Naive thymus-derived CD4-positive, alpha-beta T cell (primary cell): ENCODE measurements at regions of chr17 and their contacts with region 1.

Region 1: DNA sequence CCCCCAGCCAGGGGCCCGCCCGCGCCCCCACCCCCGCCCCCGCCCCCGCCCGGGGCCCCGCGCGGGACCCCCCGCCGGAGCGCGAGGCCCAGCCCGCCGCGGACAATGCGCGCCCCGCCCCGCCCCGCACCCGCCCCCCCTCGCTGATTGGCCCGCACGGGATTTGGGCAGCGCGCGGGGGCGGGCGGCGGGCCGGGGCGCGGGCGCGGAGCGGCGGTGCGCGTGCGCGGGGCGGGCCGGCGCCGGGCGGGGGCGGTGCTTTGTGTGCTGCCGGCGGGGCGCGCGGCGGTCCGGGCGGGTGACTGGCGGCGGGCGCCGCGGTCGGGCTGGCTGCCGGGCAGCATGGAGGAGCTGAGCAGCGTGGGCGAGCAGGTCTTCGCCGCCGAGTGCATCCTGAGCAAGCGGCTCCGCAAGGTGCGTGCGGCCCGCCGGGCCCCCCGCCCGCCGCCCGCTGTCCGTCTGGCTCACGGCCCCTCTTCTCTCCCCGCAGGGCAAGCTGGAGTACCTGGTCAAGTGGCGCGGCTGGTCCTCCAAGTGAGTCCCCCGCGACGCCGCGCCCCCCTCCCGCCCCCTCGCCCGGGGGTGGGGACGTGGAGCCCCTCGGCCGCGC is at the start of gene CBX2:
- DNase-seq: peak; percentile 58 to 92 (median 77)
- ATAC-seq: peak; percentile 95
- H3K4me3 ChIP-seq: peak within 1 kb of the TSS; percentile 28
- H3K4me3 Mint-ChIP-seq: peak within 1 kb of the TSS; percentile 80 to 92 (median 86)
- H3K27ac ChIP-seq: no peak within 1 kb of the TSS
- H3K27ac Mint-ChIP-seq: peak within 1 kb of the TSS in 8 of 9 donors; percentile 32 to 89 (median 72)
- H3K4me1 ChIP-seq: peaks cover 7 to 10% of the 10 kb centered on the region in 2 donors
- H3K4me1 Mint-ChIP-seq: peaks cover 10 to 37% (median 24%) of the 10 kb centered on the region in 7 donors
- H3K27me3 ChIP-seq: peaks cover 11 to 26% of the 10 kb centered on the region in 2 donors
- H3K27me3 Mint-ChIP-seq: peaks cover 72 to 84% (median 77%) of the 10 kb centered on the region in 5 donors
- total RNA-seq, gene CBX2: 0.24 to 4.4 (median 0.41) TPM

Region 2: DNA sequence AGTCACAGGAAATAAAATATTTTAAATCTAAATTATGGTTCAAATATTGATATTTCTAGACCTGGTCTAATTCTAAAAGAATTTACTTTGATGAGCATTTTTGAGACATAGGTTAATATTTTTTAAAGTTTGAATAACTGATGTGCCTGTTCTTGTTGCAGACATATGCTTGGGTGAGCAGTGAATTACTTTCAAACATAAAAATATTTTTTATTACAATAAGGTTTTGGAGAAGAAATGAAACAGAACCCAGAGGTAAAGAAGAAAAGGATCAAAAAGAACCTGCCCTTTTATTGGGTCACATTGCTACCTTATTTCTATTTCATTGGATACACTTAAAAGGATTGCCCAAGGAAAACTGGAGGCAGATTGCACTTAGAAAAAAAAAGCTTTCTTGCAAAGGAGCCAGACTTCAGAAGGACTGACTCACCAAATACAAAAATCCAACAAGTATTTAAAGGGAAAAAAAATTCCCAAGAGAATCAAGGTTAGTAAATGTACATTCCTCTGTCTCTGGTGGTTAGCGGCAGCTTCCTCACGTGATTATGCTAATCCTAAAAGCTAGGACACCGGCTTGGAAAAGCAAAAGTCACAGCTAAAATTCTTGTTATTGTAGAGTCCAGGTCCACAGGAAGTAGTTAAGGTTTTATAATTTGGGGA is 28.7 kb before region 1 on chr17:
- CTCF ChIA-PET with region 1: interaction called, 3 read pairs
- POLR2A ChIA-PET with region 1: interaction called, 3 read pairs
- intact Hi-C with region 1: loop called in 1 of 2 experiments (anchors 2 kb)
- DNase-seq: no peak
- ATAC-seq: no peak
- H3K4me3 ChIP-seq: no peak overlapping the region
- H3K4me3 Mint-ChIP-seq: no peak overlapping the region
- H3K27ac ChIP-seq: no peak overlapping the region
- H3K27ac Mint-ChIP-seq: no peak overlapping the region
- H3K4me1 ChIP-seq: peaks cover 0 to 25% of the 10 kb centered on the region in 2 donors
- H3K4me1 Mint-ChIP-seq: peaks cover 0 to 28% (median 21%) of the 10 kb centered on the region in 7 donors
- H3K27me3 ChIP-seq: peaks cover 0 to 19% of the 10 kb centered on the region in 2 donors
- H3K27me3 Mint-ChIP-seq: peaks cover 34 to 60% (median 42%) of the 10 kb centered on the region in 5 donors

Region 3: GRCh38 chr17:80035943-80036714 is 258.1 kb after region 1 on chr17 and contains the start of gene CCDC40:
- CTCF ChIA-PET with region 1: no interaction called
- POLR2A ChIA-PET with region 1: no interaction called
- intact Hi-C with region 1: no loop called
- DNase-seq: peak; percentile 66 to 85 (median 78)
- ATAC-seq: peak; percentile 91
- H3K4me3 ChIP-seq: peak within 1 kb of the TSS; percentile 81
- H3K4me3 Mint-ChIP-seq: peak within 1 kb of the TSS; percentile 78 to 94 (median 85)
- H3K27ac ChIP-seq: peak within 1 kb of the TSS; percentile 76
- H3K27ac Mint-ChIP-seq: peak within 1 kb of the TSS; percentile 60 to 96 (median 84)
- H3K4me1 ChIP-seq: peaks cover 4 to 6% of the 10 kb centered on the region in 2 donors
- H3K4me1 Mint-ChIP-seq: peaks cover 5 to 18% (median 9%) of the 10 kb centered on the region in 7 donors
- H3K27me3 ChIP-seq: peaks cover 0 to 3% of the 10 kb centered on the region in 2 donors
- H3K27me3 Mint-ChIP-seq: peaks cover 0 to 63% (median 10%) of the 10 kb centered on the region in 5 donors
- total RNA-seq, gene CCDC40: 0.43 to 3.0 (median 0.79) TPM